Astrocyte of the cerebellum (primary cell): ENCODE measurements at regions of chr2 and their contacts with region 1.

Region 1: DNA sequence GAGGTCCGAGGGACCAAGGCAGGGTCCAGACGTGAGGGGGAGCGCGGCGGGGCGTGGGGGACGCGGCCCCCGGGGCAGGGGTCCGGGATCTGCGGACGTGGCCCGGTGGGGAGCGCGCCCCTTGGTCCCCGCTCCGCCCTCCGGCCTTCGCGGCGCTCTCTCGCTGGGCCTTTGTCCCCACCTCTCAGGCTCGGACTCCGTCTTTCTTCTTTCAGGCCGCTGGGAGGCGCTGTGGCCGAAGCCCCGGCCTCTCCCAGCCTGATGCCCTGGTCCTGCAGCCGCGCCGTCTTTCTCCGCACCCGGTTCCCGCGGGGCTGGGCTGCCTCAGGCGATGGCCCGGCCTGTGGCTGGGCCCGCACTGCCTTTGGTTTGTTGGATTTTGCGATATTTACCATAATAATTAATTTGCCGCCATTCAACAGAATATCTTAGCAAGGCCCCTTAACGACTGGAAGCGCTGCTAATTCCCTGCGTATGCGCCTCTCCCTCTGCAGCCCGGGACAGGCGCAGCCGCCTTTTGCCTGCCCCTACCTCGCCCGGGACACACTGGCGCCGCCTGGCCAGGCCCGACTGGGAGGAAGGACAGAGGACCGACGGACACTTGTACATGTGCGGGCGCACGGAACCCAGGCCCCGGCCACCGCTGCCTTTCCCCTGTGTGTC is 10.8 kb downstream of the SIX3 start:
- DNase-seq: no peak
- H3K4me3 ChIP-seq: peak overlapping the region; percentile 28
- CTCF ChIP-seq: peak; percentile 72

Region 2: GRCh38 chr2:44397447-44398175 is 554.7 kb before region 1 on chr2:
- in situ Hi-C with region 1: loop called (anchors 5 kb)
- DNase-seq: no peak
- H3K4me3 ChIP-seq: no peak overlapping the region
- CTCF ChIP-seq: no peak

Region 3: GRCh38 chr2:45009303-45009927 is 57.1 kb after region 1 on chr2 and contains the start of gene SIX2:
- in situ Hi-C with region 1: no loop called
- DNase-seq: peak; percentile 77
- H3K4me3 ChIP-seq: peak within 1 kb of the TSS; percentile 41
- CTCF ChIP-seq: no peak